CD4-positive, alpha-beta T cell (primary cell): ENCODE measurements at regions of chr1 and their contacts with region 1.

Region 1: GRCh38 chr1:100037927-100038659 is 68.3 kb downstream of the SLC35A3 start:
- DNase-seq: peak; percentile 76 to 96 (median 84)
- ATAC-seq: peak; percentile 78
- H3K4me3 ChIP-seq: peak overlapping the region; percentile 91
- H3K4me3 Mint-ChIP-seq: peak overlapping the region; percentile 98
- H3K27ac ChIP-seq: peak overlapping the region; percentile 94 to 98
- H3K27ac Mint-ChIP-seq: peak overlapping the region; percentile 98
- H3K4me1 ChIP-seq: peaks cover 28% of the 10 kb centered on the region
- H3K4me1 Mint-ChIP-seq: peaks cover 58% of the 10 kb centered on the region
- H3K27me3 ChIP-seq: no peaks in the 10 kb centered on the region
- H3K27me3 Mint-ChIP-seq: no peaks in the 10 kb centered on the region
- CTCF ChIP-seq: no peak

Region 2: GRCh38 chr1:98870959-98871903 is 1166.9 kb before region 1 on chr1:
- CTCF ChIA-PET with region 1: no interaction called
- POLR2A ChIA-PET with region 1: no interaction called
- intact Hi-C with region 1: loop called in 1 of 2 experiments (anchors 5 kb)
- DNase-seq: peak in 12 of 14 experiments; percentile 8 to 96 (median 41)
- ATAC-seq: peak; percentile 92
- H3K4me3 ChIP-seq: peak overlapping the region; percentile 48
- H3K4me3 Mint-ChIP-seq: peak overlapping the region; percentile 86
- H3K27ac ChIP-seq: peak overlapping the region; percentile 59 to 84
- H3K27ac Mint-ChIP-seq: peak overlapping the region; percentile 91
- H3K4me1 ChIP-seq: peaks cover 18% of the 10 kb centered on the region
- H3K4me1 Mint-ChIP-seq: peaks cover 55% of the 10 kb centered on the region
- H3K27me3 ChIP-seq: no peaks in the 10 kb centered on the region
- H3K27me3 Mint-ChIP-seq: no peaks in the 10 kb centered on the region
- CTCF ChIP-seq: no peak

Region 3: GRCh38 chr1:99849744-99850458 is 188.2 kb before region 1 on chr1 and contains the start of gene AGL:
- CTCF ChIA-PET with region 1: no interaction called
- POLR2A ChIA-PET with region 1: interaction called, 12 read pairs
- intact Hi-C with region 1: loop called in 1 of 2 experiments (anchors 5 kb)
- DNase-seq: peak; percentile 76 to 93 (median 83)
- ATAC-seq: peak; percentile 97
- H3K4me3 ChIP-seq: peak within 1 kb of the TSS; percentile 95
- H3K4me3 Mint-ChIP-seq: peak within 1 kb of the TSS; percentile 95
- H3K27ac ChIP-seq: peak within 1 kb of the TSS; percentile 64 to 65
- H3K27ac Mint-ChIP-seq: peak within 1 kb of the TSS; percentile 88
- H3K4me1 ChIP-seq: peaks cover 14% of the 10 kb centered on the region
- H3K4me1 Mint-ChIP-seq: peaks cover 42% of the 10 kb centered on the region
- H3K27me3 ChIP-seq: no peaks in the 10 kb centered on the region
- H3K27me3 Mint-ChIP-seq: no peaks in the 10 kb centered on the region
- CTCF ChIP-seq: no peak
- total RNA-seq, gene AGL: 8.6 to 9.6 TPM

Region 4: GRCh38 chr1:100249537-100250257 is 211.6 kb after region 1 on chr1 and contains the start of gene DBT:
- CTCF ChIA-PET with region 1: no interaction called
- POLR2A ChIA-PET with region 1: interaction called, 4 read pairs
- intact Hi-C with region 1: loop called in 1 of 2 experiments (anchors 5 kb)
- DNase-seq: peak; percentile 82 to 95 (median 86)
- ATAC-seq: peak; percentile 99
- H3K4me3 ChIP-seq: peak within 1 kb of the TSS; percentile 88
- H3K4me3 Mint-ChIP-seq: no peak within 1 kb of the TSS
- H3K27ac ChIP-seq: peak within 1 kb of the TSS; percentile 51 to 69
- H3K27ac Mint-ChIP-seq: no peak within 1 kb of the TSS
- H3K4me1 ChIP-seq: peaks cover 11% of the 10 kb centered on the region
- H3K4me1 Mint-ChIP-seq: peaks cover 15% of the 10 kb centered on the region
- H3K27me3 ChIP-seq: no peaks in the 10 kb centered on the region
- H3K27me3 Mint-ChIP-seq: no peaks in the 10 kb centered on the region
- CTCF ChIP-seq: no peak
- total RNA-seq, gene DBT: 5.3 to 5.4 TPM

Region 5: GRCh38 chr1:100895540-100896483 is 857.7 kb after region 1 on chr1 and contains the start of gene SLC30A7:
- CTCF ChIA-PET with region 1: no interaction called
- POLR2A ChIA-PET with region 1: no interaction called
- intact Hi-C with region 1: loop called (anchors 2 to 10 kb)
- DNase-seq: peak; percentile 91 to 98 (median 97)
- ATAC-seq: peak; percentile 71
- H3K4me3 ChIP-seq: peak within 1 kb of the TSS; percentile 93
- H3K4me3 Mint-ChIP-seq: peak within 1 kb of the TSS; percentile 98
- H3K27ac ChIP-seq: peak within 1 kb of the TSS; percentile 98 to 100
- H3K27ac Mint-ChIP-seq: peak within 1 kb of the TSS; percentile 99
- H3K4me1 ChIP-seq: peaks cover 10% of the 10 kb centered on the region
- H3K4me1 Mint-ChIP-seq: peaks cover 69% of the 10 kb centered on the region
- H3K27me3 ChIP-seq: no peaks in the 10 kb centered on the region
- H3K27me3 Mint-ChIP-seq: no peaks in the 10 kb centered on the region
- CTCF ChIP-seq: no peak
- total RNA-seq, gene SLC30A7: 21.6 to 21.7 TPM